Dorsolateral prefrontal cortex (tissue), 120 donors: ENCODE measurements at regions of chr6 and their contacts with region 1.

Region 1: DNA sequence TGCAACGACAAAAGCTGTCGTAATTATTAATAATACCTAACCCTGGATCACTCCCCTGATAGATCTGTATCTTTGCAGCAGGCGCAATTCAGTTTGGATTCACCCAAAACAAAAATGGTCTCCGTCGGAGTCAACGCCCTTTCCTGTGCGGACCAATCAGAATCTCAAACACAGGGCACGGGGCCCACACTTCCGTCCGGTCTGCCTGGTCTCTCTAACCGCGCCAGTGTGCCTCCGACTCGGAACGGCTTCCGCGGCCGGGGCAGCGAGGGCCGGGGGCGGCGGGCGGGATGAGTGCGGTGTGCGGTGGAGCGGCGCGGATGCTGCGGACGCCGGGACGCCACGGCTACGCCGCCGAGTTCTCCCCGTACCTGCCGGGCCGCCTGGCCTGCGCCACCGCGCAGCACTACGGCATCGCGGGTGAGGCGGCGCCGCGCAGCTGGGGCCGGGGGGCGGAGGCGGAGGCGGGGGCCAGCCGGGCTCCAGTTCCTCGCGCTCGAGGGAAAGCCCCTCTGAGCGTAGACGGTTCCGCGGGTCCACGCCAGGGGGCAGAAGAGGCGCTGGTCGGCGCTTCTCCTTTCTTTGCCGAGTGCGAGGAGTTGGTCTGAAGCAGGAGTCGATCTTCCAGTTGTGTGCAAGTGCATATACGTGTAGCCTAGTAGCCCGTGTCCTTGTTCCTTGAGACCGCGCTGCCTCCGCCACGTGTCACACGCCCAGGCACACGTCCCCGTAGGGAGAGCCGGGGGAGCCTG is at the start of gene PEX7:
- DNase-seq: peak; percentile 89 to 95 (median 93)
- H3K4me3 ChIP-seq: peak within 1 kb of the TSS; percentile 54 to 91 (median 77)
- H3K27ac ChIP-seq: peak within 1 kb of the TSS in 58 of 59 donors; percentile 58 to 96 (median 89)
- H3K27me3 ChIP-seq: no peaks in the 10 kb centered on the region
- CTCF ChIP-seq: peak in 55 of 56 donors; percentile 28 to 84 (median 64)
- total RNA-seq, gene PEX7: 2.1 to 11.5 (median 7.1) TPM

Region 2: DNA sequence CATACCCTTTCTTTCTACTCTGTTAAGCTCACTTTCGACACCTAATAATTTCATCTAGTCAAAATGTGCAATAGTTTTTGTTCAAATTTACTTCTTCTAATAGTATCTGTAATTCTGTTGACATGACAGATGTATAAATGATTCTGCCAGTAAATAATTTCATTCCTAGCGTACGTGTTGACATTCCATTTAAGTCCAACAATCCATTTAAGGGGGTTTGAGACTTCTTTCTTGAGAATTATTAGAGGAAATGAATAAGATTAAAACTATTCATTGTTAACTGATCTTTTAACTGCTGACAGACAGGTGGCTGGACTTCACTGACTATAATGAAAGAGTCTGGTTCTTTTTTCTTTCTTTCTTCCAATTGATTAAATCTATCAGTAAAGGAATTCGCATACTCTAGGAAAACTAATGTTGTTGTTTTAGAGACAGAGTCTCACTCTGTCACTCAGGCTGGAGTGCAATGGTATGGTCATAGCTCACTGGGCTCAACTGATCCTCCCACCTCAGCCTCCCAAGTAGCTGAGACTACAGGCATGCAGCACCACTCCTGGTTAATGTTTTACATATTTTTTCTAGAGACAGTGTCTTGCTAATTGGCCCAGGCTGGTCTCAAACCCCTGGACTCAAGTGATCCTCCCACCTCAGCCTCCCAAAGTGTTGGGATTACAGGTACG is 86.1 kb before region 1 on chr6:
- intact Hi-C with region 1: no loop called
- DNase-seq: no peak
- H3K4me3 ChIP-seq: no peak overlapping the region
- H3K27ac ChIP-seq: peak overlapping the region in 8 of 59 donors; percentile 12 to 52 (median 30)
- H3K27me3 ChIP-seq: no peaks in the 10 kb centered on the region
- CTCF ChIP-seq: no peak

Region 3: DNA sequence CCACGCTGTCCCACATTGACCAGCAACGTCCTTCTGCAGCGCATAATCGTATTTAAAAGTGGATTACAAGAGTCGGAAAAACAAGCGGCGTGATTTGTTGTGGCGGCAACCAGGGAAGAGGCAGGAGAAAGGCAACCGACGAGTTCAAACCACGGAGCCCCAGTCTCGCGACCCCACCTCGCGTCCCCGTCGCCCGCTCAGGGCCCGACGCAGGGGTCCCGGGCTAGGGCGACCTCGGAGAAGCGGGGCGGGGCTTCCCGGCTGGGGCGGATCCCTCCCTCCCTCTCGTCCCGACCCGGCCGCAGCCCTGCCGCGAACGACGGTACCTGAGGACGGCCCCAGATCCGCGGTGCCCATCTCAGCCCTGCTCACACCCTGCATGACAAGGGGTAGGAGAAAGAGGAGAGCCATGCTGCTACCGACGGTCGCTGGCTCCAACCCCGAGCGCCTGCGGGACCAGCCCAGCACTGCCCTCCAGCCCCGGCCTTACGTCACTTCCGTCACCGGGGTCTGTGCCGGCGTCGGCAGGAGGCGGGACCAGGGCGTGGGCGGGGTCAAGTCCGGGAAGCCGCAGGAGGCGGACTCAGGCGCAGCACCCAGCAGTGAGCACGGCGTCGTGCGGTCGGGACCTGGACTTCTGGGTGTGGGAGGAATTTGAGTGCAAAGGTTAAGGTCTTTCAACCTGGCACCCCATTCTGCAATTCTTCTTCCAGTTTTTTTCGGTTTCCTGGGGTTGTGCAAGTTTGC is 396.5 kb after region 1 on chr6 and contains the start of gene IFNGR1:
- intact Hi-C with region 1: loop called in 1 of 2 experiments (anchors 5 kb)
- DNase-seq: peak; percentile 93 to 99 (median 97)
- H3K4me3 ChIP-seq: peak within 1 kb of the TSS; percentile 58 to 99 (median 93)
- H3K27ac ChIP-seq: peak within 1 kb of the TSS; percentile 64 to 98 (median 95)
- H3K27me3 ChIP-seq: no peaks in the 10 kb centered on the region
- CTCF ChIP-seq: peak in 31 of 56 donors; percentile 7 to 56 (median 25)
- total RNA-seq, gene IFNGR1: 27.5 to 68.4 (median 46.0) TPM